Right ventricle myocardium inferior (tissue), 1 donor: ENCODE measurements at regions of chr2 and their contacts with region 1.

Region 1: DNA sequence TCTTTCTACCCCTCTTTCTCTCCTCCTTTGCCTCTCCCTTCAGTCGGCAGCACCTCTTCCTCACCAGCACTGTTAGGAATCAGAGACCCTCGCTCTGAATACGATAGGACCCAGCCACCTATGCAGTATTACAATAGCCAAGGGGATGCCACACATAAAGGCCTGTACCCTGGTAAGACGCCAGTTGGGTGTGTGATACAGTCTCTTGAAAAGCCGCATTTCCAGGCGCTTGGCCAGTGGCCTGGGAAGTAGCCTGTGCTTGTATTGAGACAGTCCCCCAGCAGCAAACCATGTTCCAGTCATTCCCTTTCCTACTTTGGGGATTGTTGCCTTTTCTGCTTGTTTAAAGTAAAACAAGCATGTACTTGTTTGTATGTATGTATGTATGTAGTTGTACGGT is 118.4 kb upstream of the DAPL1 start:
- DNase-seq: no peak
- ATAC-seq: peak; percentile 77

Region 2: DNA sequence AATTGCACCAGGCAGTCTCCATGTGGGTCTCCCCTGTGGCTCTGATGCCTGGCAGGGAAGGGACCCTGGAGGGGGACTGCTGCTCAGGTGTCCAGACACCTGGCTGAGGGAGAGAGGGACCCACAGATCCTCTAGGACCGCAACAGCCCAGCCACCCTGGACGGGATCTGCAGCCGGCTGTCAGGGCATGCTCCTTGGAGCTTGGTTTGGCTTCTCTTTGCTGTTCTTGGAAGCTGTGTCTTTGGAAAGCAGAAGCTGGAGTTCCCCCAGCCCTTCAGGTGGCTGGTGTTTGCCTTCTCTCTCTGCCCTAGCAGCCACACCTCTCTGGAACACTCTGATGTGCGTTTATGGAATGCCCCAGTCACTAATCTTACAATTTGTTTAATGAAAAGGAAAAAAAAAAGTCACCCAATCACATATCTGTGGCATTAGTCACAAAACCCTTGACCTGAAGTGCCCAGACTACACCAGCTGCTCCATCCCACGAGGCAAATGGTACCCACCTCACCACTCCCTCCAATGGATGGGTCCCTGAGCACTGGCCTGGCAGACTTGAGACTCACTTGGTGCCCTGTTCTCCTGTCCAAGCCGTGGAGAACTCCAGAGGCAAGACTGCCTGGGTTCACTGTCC is 48.1 kb after region 1 on chr2:
- intact Hi-C with region 1: loop called (anchors 5 kb)
- DNase-seq: no peak
- ATAC-seq: no peak